Lower leg skin (tissue), 4 donors: ENCODE measurements at regions of chr3 and their contacts with region 1.

Region 1: DNA sequence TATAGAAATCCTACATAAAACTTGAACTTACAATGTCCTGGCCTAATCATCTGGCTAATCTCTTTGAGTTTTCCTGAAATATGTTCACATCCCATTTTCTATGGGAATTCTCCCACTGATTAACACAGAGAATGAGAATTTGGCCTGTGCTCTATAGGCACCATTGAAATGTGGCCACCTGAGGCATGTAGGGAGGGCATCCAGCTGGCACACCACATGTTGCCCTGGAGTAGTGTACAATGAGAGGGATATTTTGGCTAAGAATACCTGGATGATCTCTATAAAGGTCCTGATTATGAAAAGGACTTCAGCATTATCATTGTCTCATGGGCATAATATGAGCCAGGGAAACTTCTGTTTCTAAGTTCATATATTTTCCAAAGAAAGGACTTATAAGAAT is 324.0 kb downstream of the ZBTB20 start:
- DNase-seq: no peak
- H3K4me3 ChIP-seq: no peak overlapping the region
- CTCF ChIP-seq: no peak
- POLR2A ChIP-seq: no peak

Region 2: DNA sequence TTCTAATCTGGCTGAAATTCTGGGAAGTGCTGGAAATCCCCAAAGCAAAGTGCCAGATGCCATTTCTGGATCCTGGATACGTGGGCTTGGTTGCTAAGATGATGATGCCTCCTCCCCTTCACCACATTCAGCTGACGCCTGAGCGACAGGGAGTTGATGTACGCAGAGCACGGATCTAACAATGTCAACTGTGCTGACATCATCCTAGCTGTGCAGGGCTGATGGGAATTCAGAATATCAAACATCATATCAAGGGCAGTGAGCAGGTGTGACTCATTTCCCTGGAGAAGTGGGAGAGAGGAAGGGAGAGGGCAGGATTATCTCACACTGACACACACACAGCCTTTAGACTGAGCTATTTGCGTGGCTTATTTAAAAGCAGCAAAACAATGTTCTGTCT is 416.7 kb after region 1 on chr3:
- intact Hi-C with region 1: loop called (anchors 5 kb)
- DNase-seq: peak; percentile 43 to 85
- H3K4me3 ChIP-seq: no peak overlapping the region
- CTCF ChIP-seq: no peak
- POLR2A ChIP-seq: no peak